HepG2 (cell line): ENCODE measurements at regions of chr16 and their contacts with region 1.

Region 1: GRCh38 chr16:81444448-81445121 is at the start of gene CMIP:
- DNase-seq: peak; percentile 68
- ATAC-seq: peak; percentile 4; the same call in 2 of the 3 replicates
- H3K4me3 ChIP-seq: peak within 1 kb of the TSS; percentile 92 to 99 (median 93)
- H3K27ac ChIP-seq: peak within 1 kb of the TSS; percentile 89
- H3K4me1 ChIP-seq: peaks cover 46% of the 10 kb centered on the region
- H3K27me3 ChIP-seq: peaks cover 2 to 24% of the 10 kb centered on the region in 2 experiments; a peak in 3 of 5 replicates
- CTCF ChIP-seq: no peak
- EP300 ChIP-seq: no peak
- POLR2A ChIP-seq: peak in 1 of 2 experiments; percentile 14; a peak in 1 of 4 replicates
- RAD21 ChIP-seq: peak; percentile 35; the same call in 1 of the 2 replicates
- total RNA-seq, gene CMIP: 10.9 and 21.7 TPM in 2 replicates

Region 2: DNA sequence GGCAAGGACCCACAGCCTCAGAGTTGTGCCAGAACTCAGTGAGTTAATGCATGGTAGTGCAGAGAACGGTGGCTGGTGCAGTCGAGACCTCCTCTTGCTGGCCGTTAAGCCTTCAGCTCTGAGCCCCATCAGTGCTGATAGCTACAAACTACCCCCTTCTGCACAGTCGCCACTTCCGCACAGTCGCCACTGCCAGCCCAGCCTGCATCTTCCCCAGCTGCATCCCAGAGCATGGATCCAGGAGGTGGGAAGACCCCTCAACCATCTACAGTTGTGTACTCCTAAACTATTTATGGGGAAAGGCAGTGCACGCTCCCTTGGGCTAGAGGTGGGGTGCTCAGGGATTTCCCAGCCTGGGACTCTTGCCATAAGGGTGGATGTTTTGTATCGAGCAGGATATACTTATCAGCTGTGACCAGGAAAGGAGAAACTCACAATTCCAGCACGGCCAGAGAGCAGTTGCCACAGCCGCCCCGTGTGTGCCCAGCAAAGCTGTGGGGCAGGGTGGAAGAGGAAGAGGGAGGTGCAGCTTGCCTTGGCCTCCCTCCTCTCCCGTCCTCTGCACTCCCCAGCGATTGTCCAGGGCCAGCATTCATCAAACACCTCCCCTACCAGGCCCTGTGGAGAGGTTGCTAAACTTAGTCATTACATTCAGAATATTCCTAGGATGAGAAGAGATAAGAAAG is 49.5 kb before region 1 on chr16:
- CTCF ChIA-PET with region 1: no interaction called
- POLR2A ChIA-PET with region 1: no interaction called
- in situ Hi-C with region 1: no loop called
- intact Hi-C with region 1: no loop called
- DNase-seq: no peak
- ATAC-seq: peak; percentile 30
- H3K4me3 ChIP-seq: no peak overlapping the region
- H3K27ac ChIP-seq: no peak overlapping the region
- H3K4me1 ChIP-seq: no peaks in the 10 kb centered on the region
- H3K27me3 ChIP-seq: no peaks in the 10 kb centered on the region
- CTCF ChIP-seq: no peak
- EP300 ChIP-seq: no peak
- POLR2A ChIP-seq: no peak
- RAD21 ChIP-seq: no peak

Region 3: DNA sequence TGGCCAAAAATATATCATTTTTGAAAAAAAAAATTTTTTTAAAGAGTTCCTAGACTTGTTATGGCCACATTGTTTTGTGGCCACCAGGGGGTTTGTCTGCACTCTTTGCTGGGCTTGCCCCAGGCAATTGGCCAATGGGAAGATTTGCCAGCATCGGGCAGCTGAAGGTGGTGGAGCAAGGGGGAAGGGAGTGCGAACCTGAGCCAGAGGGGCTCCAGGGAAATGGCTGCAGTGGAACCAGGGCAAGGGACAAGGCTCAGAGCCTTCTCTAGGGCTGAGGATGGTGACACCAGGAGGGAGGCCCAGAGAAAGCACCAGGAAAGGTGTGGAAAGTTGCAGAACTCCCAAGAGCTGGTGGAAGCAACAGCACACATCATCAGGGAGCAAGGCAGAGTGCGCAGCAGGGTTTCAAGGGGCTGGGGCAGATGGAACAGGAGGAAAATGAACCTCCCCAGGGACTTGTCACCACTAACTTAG is 15.5 kb before region 1 on chr16:
- CTCF ChIA-PET with region 1: no interaction called
- POLR2A ChIA-PET with region 1: interaction called, 61 read pairs
- in situ Hi-C with region 1: no loop called
- intact Hi-C with region 1: no loop called
- DNase-seq: peak; percentile 76
- ATAC-seq: peak; percentile 77
- H3K4me3 ChIP-seq: peak overlapping the region in 1 of 3 experiments; percentile 51; a peak in 2 of 6 replicates
- H3K27ac ChIP-seq: no peak overlapping the region
- H3K4me1 ChIP-seq: peaks cover 56% of the 10 kb centered on the region
- H3K27me3 ChIP-seq: no peaks in the 10 kb centered on the region
- CTCF ChIP-seq: peak; percentile 72
- EP300 ChIP-seq: no peak
- POLR2A ChIP-seq: no peak
- RAD21 ChIP-seq: peak; percentile 81

Region 4: DNA sequence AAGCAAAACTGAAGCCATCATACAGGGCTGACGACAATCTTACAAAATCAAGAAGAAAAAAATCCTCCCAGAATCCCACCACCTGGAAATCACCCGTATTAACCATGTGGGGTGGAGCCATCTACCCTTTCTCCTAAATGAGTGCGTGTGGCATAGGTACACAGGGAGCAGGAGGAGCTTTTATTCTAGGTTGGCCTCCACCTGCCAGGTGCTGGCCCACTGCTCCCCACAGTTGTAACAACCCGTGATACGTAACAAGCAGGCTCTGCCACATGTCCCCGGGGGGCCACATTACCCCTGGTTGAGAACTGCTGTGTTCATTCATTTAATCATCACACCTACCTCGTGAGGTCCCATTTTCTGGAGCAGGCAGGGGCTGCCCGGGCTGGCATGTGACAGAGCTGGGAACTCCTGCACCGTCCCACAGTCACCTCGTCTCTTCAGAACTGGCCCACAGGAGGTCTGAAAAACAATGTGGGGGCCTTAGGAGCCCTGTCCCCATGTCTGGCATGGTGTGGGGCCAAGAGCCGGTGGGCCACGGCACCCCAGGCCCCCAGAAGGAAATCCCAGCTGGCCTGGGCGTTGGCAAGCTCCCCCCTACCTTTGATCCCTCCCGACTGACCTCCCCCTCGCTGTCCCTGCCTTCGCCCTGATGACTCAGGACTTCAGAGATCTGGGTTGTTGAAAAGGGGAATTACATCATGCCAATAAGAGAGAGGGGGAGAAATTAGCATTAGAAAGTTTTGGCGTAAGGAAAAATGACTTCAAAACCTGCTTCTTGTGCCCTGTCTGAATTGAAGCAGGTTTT is 12.9 kb after region 1 on chr16:
- CTCF ChIA-PET with region 1: no interaction called
- POLR2A ChIA-PET with region 1: interaction called, 61 read pairs
- in situ Hi-C with region 1: no loop called
- intact Hi-C with region 1: no loop called
- DNase-seq: peak; percentile 89
- ATAC-seq: peak; percentile 58
- H3K4me3 ChIP-seq: peak overlapping the region in 1 of 3 experiments; percentile 42; a peak in 3 of 6 replicates
- H3K27ac ChIP-seq: peak overlapping the region; percentile 70
- H3K4me1 ChIP-seq: peaks cover 100% of the 10 kb centered on the region
- H3K27me3 ChIP-seq: no peaks in the 10 kb centered on the region
- CTCF ChIP-seq: no peak
- EP300 ChIP-seq: peak; percentile 57 to 87; a peak in 2 of 4 replicates
- POLR2A ChIP-seq: peak in 1 of 2 experiments; percentile 6; a peak in 1 of 4 replicates
- RAD21 ChIP-seq: no peak; the same call in 1 of the 2 replicates

Region 5: DNA sequence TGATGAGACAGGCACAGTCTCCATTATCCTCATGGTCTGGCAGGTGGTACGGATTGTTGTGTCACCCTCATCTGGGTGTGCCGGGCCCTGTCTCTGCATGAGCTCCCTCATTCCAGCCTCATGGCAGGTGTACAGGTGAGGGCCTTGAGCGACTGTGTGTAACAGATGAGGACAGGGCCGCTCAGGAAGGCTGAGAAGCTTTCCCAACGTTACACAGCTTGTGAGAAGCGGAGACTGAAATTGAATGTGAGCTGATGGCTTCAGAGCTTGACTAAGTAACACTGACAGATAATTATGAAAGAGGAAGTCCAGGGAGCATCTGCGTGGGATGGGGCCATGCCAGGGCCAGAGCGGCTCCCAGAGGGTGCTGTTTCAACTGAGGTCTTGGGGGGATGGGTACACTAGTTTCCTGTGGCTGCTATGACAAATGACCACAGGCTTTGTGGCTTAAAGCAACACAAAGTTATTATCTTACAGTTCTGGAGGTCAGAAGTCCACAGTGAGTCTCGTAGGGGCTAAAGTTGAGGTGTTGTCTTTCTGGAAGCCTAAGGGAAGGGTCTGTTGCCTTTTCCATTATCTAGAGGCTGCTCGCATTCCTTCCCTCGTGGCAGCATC is 36.7 kb after region 1 on chr16:
- CTCF ChIA-PET with region 1: no interaction called
- POLR2A ChIA-PET with region 1: interaction called, 10 read pairs
- in situ Hi-C with region 1: no loop called
- intact Hi-C with region 1: no loop called
- DNase-seq: peak; percentile 94
- ATAC-seq: peak; percentile 87
- H3K4me3 ChIP-seq: peak overlapping the region in 1 of 3 experiments; percentile 32; a peak in 2 of 6 replicates
- H3K27ac ChIP-seq: peak overlapping the region; percentile 60
- H3K4me1 ChIP-seq: peaks cover 79% of the 10 kb centered on the region
- H3K27me3 ChIP-seq: no peaks in the 10 kb centered on the region
- CTCF ChIP-seq: peak; percentile 55
- EP300 ChIP-seq: peak; percentile 67 to 84
- POLR2A ChIP-seq: peak in 1 of 2 experiments; percentile 25; a peak in 2 of 4 replicates
- RAD21 ChIP-seq: peak; percentile 53; the same call in 1 of the 2 replicates

Region 6: DNA sequence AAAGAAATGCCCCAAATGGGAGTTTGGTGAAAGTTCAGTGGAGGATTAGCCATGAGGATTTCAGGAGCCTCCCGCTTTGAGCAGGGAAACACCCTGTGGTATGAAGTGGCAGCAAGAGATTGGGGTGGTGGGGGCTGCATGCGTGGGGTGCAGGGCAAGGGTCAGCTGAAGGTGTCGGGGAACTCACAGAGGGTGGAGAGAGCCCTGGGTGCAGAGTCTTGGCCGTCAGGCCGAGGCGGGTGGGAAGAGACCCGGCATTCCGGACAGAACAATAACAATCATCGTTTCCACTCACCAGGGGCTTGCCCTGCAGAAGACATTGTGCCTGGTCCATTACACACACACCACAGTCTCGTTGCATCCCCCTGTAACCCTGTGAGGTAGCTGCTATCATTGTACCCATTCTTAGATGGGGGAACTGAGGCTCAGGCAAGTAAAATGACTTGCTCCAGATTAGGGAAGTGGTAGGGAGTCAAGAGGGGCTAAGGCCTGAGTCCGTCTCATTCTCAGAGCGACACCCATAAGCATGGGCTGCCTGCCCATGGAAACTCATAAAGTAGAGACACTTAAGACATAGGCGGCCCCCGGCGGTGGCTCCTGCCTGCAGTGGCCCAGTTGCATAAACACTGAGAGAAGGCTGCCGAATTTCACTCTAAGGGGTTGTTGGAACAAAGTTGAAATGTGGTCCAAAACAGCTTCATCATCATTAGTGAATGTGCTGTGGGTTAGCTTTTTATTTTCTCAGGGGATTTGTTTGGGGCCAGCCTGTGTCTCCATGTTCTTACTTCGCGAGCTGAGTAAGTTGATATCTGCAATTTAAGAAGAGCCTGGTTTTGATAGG is 93.4 kb after region 1 on chr16:
- CTCF ChIA-PET with region 1: no interaction called
- POLR2A ChIA-PET with region 1: interaction called, 3 read pairs
- in situ Hi-C with region 1: no loop called
- intact Hi-C with region 1: loop called (anchors 2 kb)
- DNase-seq: no peak
- ATAC-seq: no peak
- H3K4me3 ChIP-seq: no peak overlapping the region
- H3K27ac ChIP-seq: no peak overlapping the region
- H3K4me1 ChIP-seq: peaks cover 100% of the 10 kb centered on the region
- H3K27me3 ChIP-seq: no peaks in the 10 kb centered on the region
- CTCF ChIP-seq: no peak
- EP300 ChIP-seq: no peak
- POLR2A ChIP-seq: no peak
- RAD21 ChIP-seq: no peak

Region 7: DNA sequence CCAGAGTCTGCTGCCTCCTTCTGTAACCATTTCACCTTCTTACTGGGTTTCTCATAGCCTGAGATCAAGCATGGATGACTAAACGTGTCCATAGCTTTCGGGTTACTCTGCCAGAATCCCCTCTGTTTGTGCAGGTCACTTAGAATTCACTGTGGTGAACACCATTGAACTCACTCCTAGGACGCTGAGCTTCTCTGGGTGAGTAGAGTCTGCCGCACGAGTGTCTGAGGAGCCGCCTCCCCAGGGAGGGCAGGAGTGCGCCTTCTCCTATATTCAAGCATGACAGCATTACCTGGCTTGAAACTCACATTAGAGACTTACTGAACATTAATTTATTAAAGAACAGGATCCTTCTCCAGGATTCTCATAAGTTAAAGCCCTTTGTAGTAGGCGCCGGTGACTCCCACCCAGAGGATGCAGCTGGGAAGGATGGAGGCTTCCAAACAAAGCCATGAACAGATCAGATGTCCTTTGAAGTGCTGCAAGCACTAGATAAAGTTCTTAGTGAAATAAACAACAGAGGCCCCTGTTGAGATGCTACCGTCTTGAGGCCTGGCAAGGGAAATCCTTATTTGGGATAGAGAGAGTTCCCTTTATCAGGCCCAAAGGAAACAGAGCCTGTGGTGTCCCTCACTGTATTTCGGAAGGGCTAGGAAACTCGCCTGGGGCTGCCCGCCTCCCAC is 189.9 kb after region 1 on chr16:
- CTCF ChIA-PET with region 1: no interaction called
- POLR2A ChIA-PET with region 1: no interaction called
- in situ Hi-C with region 1: no loop called
- intact Hi-C with region 1: no loop called
- DNase-seq: no peak
- ATAC-seq: no peak
- H3K4me3 ChIP-seq: no peak overlapping the region
- H3K27ac ChIP-seq: no peak overlapping the region
- H3K4me1 ChIP-seq: peaks cover 64% of the 10 kb centered on the region
- H3K27me3 ChIP-seq: no peaks in the 10 kb centered on the region
- CTCF ChIP-seq: no peak
- EP300 ChIP-seq: no peak
- POLR2A ChIP-seq: no peak
- RAD21 ChIP-seq: no peak